PC-9 (cell line): ENCODE measurements at regions of chr1 and their contacts with region 1.

Region 1: DNA sequence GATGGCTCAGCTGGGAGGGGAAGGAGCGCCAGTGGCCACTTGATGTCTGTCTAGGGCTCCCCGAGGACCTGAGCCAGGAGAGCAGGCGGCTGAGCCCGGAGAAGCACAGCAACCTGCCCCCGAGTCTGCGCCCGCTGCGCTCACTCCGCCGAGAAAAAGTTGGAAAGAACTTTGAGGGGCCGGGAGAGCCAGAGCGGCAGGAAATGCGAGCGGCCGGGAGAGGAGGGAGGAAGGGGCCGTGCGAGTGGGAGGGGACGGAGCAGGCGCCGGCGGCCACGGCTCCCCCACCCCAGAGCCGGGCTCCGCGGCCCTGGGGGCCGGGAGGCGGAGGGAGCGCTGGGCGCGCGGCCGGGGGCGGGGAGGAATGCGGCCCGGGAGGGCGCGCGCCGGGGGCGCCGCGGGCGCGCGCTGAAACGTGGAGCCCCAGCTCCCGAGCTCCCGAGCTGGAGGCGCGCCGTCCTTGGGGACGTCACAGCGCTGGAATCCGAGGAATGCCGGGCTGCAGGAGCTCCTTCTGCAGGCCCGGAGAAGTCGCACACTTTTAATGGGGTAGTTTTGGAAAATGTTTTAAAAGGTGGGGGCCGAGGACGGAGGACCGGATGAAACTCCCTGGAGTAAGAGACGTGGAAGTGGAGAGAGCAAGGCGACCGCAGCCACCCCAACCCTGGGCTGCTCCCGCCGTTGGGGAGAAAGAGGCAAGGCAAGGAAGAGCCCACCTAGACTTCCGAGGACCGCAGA is at the start of gene PTPN14:
- DNase-seq: peak; percentile 89 to 93
- H3K4me3 ChIP-seq: peak within 1 kb of the TSS; percentile 71
- H3K27ac ChIP-seq: peak within 1 kb of the TSS; percentile 97
- H3K4me1 ChIP-seq: peaks cover 48% of the 10 kb centered on the region
- H3K27me3 ChIP-seq: no peaks in the 10 kb centered on the region
- CTCF ChIP-seq: no peak; the same call in 1 of the 2 replicates
- total RNA-seq, gene PTPN14: 59.2 and 78.9 TPM in 2 replicates

Region 2: DNA sequence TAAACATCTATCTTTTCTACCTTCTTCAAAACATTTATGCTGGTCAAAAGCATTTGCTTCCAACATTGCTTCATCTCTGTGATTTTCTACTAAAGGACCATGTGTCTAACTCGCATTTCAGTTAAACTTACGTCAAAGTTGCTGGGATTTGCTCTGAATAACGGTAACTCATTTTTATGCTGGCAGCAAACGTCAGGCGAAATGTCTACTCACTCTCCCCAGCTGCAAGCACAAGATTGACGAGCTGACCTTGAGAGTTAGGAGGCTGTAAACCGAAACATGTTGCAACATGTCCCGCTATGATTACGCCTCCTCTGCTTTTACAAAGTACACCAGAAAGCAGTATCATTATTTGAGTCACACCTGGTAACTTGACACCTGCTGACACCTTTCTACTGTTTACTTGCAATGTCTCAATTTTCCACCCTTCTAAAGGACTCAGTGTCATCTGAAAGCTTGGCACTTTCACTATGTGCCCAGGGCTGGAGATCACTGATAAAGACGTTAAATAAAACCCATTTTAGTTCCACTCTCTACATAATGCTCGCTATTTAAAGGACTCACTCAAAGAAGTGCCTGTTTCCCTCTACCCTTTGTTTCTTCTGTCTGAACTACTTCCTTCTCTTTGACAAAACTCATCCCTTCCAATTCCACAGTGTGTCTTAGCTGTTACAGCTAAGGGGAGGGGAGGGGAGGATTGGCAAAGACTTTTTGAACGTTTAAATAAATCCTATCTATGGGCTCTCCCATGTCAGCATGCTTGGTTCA is 112.1 kb before region 1 on chr1:
- CTCF ChIA-PET with region 1: no interaction called
- POLR2A ChIA-PET with region 1: no interaction called
- intact Hi-C with region 1: loop called (anchors 2 kb)
- DNase-seq: peak; percentile 58 to 99
- H3K4me3 ChIP-seq: peak overlapping the region; percentile 37; the same call in 1 of the 2 replicates
- H3K27ac ChIP-seq: peak overlapping the region; percentile 80
- H3K4me1 ChIP-seq: peaks cover 38% of the 10 kb centered on the region
- H3K27me3 ChIP-seq: no peaks in the 10 kb centered on the region
- CTCF ChIP-seq: no peak

Region 3: GRCh38 chr1:214494706-214495105 is 56.9 kb before region 1 on chr1:
- CTCF ChIA-PET with region 1: interaction called, 3 read pairs
- POLR2A ChIA-PET with region 1: interaction called, 8 read pairs
- intact Hi-C with region 1: loop called (anchors 1 kb)
- DNase-seq: peak; percentile 41 to 99
- H3K4me3 ChIP-seq: no peak overlapping the region
- H3K27ac ChIP-seq: peak overlapping the region; percentile 32
- H3K4me1 ChIP-seq: peaks cover 43% of the 10 kb centered on the region
- H3K27me3 ChIP-seq: no peaks in the 10 kb centered on the region
- CTCF ChIP-seq: no peak

Region 4: GRCh38 chr1:214514032-214514818 is 37.4 kb before region 1 on chr1:
- CTCF ChIA-PET with region 1: no interaction called
- POLR2A ChIA-PET with region 1: interaction called, 3 read pairs
- intact Hi-C with region 1: loop called (anchors 1 kb)
- DNase-seq: no peak
- H3K4me3 ChIP-seq: no peak overlapping the region
- H3K27ac ChIP-seq: no peak overlapping the region
- H3K4me1 ChIP-seq: peaks cover 55% of the 10 kb centered on the region
- H3K27me3 ChIP-seq: no peaks in the 10 kb centered on the region
- CTCF ChIP-seq: no peak

Region 5: DNA sequence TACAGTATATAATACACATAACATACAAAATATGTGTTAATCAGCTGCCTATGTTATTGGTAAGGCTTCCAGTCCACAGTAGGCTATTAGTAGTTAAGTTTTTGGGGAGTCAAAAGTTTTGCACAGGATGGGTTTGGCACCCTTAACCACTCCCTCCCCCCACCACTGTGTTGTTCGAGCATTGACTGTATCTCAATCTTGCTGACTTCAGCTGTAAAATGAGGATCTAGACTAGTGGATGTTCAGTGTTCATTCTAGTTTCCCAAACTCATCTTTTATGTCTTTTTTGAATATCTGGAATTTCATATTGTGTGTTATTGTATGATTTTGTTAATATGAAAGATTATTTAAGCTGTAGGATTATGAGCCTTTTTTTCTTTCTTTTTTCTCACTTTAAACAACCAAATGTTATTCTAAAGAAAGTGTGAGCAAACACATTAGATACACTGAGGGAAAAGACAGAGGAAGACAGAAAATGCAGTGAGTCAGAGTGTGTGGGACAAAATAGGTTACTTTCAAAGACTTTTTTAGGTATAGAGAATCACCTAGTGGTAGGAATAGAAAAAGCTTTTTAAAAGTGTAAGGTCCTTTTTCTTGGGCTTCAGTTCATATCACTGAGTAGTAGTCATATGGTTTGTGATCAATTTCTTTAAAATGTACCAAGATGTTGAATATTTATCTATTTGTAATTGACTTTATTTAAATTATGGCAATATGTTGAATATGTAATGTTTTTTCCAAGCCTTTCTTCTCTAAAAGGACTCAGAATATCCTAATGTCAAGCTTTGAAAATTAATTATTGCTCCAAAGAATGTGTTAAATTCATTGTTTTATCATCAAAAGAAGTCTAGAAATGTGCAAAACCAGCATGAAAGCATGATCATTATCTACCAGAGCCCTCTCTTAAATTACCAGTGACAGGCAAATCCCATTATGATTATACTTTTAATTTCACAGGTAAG is 33.5 kb after region 1 on chr1:
- CTCF ChIA-PET with region 1: interaction called, 4 read pairs
- POLR2A ChIA-PET with region 1: interaction called, 12 read pairs
- intact Hi-C with region 1: loop called (anchors 1 kb)
- DNase-seq: peak in 1 of 2 experiments; percentile 73
- H3K4me3 ChIP-seq: no peak overlapping the region
- H3K27ac ChIP-seq: no peak overlapping the region
- H3K4me1 ChIP-seq: peaks cover 30% of the 10 kb centered on the region
- H3K27me3 ChIP-seq: no peaks in the 10 kb centered on the region
- CTCF ChIP-seq: peak; percentile 86